ENCODE measurements at regions of chr22 and their contacts with region 1.

Region 1: GRCh38 chr22:39502109-39502788 is at the start of gene MIEF1:
- H3K4me3 ChIP-seq: peak within 1 kb of the TSS; percentile 92
- H3K27ac ChIP-seq: peak within 1 kb of the TSS; percentile 78
- H3K4me1 ChIP-seq: peaks cover 12% of the 10 kb centered on the region
- CTCF ChIP-seq: peak; percentile 12

Region 2: GRCh38 chr22:39388261-39389011 is 113.8 kb before region 1 on chr22:
- CTCF ChIA-PET with region 1: no interaction called
- POLR2A ChIA-PET with region 1: interaction called, 10 read pairs
- H3K4me3 ChIP-seq: peak overlapping the region; percentile 61
- H3K27ac ChIP-seq: no peak overlapping the region
- H3K4me1 ChIP-seq: no peaks in the 10 kb centered on the region
- CTCF ChIP-seq: no peak

Region 3: GRCh38 chr22:39514373-39514973 is 12.2 kb after region 1 on chr22:
- CTCF ChIA-PET with region 1: interaction called, 84 read pairs
- POLR2A ChIA-PET with region 1: interaction called, 117 read pairs
- H3K4me3 ChIP-seq: no peak overlapping the region
- H3K27ac ChIP-seq: no peak overlapping the region
- H3K4me1 ChIP-seq: 0 out of 2 replicates have a peak, but pooled peaks cover 5% of the 10 kb centered on the region
- CTCF ChIP-seq: peak; percentile 64

Measured in HEK293 (cell line).